Activated CD8-positive, alpha-beta T cell treated with anti-CD3 and anti-CD28 coated beads for 36 hours (primary cell): ENCODE measurements at regions of chr1 and their contacts with region 1.

Region 1: GRCh38 chr1:35726450-35727433 is 8.1 kb upstream of the C1orf216 start:
- DNase-seq: peak; percentile 67
- ATAC-seq: peak; percentile 90
- H3K4me3 Mint-ChIP-seq: no peak overlapping the region
- H3K27ac Mint-ChIP-seq: no peak overlapping the region
- H3K4me1 Mint-ChIP-seq: no peaks in the 10 kb centered on the region
- H3K27me3 Mint-ChIP-seq: no peaks in the 10 kb centered on the region
- CTCF ChIP-seq: peak; percentile 85

Region 2: DNA sequence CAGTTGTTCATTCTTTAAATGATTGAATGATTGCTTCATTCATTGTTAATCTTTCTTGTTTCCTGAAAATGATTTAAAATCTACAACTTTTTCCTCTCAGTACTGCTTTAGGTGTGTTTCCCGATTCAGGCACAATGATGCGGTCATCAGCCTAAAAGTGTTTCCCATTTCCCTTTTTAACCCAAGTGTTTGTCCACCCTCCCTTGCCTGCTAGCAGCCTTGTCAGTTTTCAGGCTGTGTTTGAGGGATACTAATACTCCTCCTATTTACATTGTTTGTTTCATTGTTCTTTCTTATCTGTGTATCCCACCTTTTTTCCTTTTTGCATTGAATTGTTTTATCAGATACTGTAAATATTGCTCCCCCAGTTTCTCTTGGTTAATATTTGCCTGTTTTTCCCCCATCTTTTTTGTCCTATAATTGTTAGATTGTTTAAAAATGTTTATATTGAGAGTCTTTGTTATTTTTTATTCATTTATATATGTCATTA is 300.6 kb before region 1 on chr1:
- CTCF ChIA-PET with region 1: no interaction called
- POLR2A ChIA-PET with region 1: no interaction called
- intact Hi-C with region 1: no loop called
- DNase-seq: no peak
- ATAC-seq: no peak
- H3K4me3 Mint-ChIP-seq: no peak overlapping the region
- H3K27ac Mint-ChIP-seq: no peak overlapping the region
- H3K4me1 Mint-ChIP-seq: peaks cover 1% of the 10 kb centered on the region
- H3K27me3 Mint-ChIP-seq: no peaks in the 10 kb centered on the region
- CTCF ChIP-seq: no peak

Region 3: DNA sequence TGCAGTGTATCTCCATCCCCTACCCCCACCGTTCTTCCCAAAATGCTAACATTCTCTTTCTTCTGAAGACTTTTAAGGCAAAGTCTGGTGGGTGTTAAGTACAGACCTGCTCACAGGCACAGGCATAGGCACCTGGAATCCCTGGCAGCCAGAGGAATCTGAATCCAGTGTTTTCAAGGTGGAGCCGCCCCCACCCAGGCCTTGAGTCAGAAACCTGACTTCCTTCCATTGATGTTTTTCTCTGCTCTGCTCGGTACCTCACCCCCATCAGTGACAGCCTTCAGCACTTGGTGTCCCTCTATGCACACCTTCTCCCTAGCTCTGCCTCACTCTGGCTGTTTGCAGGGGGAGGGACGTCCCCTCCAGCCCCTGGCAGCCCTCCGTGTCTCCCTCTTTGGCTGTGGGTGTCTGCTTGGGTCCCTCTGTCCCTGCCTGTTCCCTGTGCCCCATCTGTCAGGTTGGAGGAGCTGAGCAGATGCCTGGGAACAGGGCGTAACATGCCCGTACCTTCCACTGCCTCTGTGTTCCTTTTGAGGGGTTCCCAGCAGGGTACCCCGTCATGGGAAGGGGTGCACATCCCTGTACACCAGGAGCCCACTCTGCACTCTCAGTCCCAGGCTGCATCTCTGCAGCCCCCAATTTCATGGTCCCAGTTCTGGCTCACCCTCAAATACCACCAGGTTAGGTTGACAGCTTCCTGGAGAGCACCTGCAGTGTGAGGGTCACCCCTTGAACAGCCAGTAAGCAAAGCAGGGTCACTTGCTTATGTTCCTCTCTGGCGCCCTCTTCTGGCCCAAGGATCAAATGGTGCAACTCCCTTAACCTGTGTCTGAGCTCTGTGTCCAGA is 162.5 kb before region 1 on chr1:
- CTCF ChIA-PET with region 1: interaction called, 50 read pairs
- POLR2A ChIA-PET with region 1: no interaction called
- intact Hi-C with region 1: no loop called
- DNase-seq: peak; percentile 93
- ATAC-seq: peak; percentile 83
- H3K4me3 Mint-ChIP-seq: no peak overlapping the region
- H3K27ac Mint-ChIP-seq: peak overlapping the region; percentile 50
- H3K4me1 Mint-ChIP-seq: peaks cover 24% of the 10 kb centered on the region
- H3K27me3 Mint-ChIP-seq: no peaks in the 10 kb centered on the region
- CTCF ChIP-seq: peak; percentile 83

Region 4: DNA sequence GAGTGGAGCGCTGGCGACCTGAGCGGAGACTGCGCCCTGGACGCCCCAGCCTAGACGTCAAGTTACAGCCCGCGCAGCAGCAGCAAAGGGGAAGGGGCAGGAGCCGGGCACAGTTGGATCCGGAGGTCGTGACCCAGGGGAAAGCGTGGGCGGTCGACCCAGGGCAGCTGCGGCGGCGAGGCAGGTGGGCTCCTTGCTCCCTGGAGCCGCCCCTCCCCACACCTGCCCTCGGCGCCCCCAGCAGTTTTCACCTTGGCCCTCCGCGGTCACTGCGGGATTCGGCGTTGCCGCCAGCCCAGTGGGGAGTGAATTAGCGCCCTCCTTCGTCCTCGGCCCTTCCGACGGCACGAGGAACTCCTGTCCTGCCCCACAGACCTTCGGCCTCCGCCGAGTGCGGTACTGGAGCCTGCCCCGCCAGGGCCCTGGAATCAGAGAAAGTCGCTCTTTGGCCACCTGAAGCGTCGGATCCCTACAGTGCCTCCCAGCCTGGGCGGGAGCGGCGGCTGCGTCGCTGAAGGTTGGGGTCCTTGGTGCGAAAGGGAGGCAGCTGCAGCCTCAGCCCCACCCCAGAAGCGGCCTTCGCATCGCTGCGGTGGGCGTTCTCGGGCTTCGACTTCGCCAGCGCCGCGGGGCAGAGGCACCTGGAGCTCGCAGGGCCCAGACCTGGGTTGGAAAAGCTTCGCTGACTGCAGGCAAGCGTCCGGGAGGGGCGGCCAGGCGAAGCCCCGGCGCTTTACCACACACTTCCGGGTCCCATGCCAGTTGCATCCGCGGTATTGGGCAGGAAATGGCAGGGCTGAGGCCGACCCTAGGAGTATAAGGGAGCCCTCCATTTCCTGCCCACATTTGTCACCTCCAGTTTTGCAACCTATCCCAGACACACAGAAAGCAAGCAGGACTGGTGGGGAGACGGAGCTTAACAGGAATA is 149.4 kb before region 1 on chr1:
- CTCF ChIA-PET with region 1: interaction called, 14 read pairs
- POLR2A ChIA-PET with region 1: interaction called, 3 read pairs
- intact Hi-C with region 1: no loop called
- DNase-seq: peak; percentile 81
- ATAC-seq: peak; percentile 92
- H3K4me3 Mint-ChIP-seq: peak overlapping the region; percentile 81
- H3K27ac Mint-ChIP-seq: peak overlapping the region; percentile 87
- H3K4me1 Mint-ChIP-seq: peaks cover 20% of the 10 kb centered on the region
- H3K27me3 Mint-ChIP-seq: peaks cover 10% of the 10 kb centered on the region
- CTCF ChIP-seq: no peak

Region 5: GRCh38 chr1:35715568-35716002 is 11.2 kb before region 1 on chr1:
- CTCF ChIA-PET with region 1: interaction called, 131 read pairs
- POLR2A ChIA-PET with region 1: no interaction called
- intact Hi-C with region 1: no loop called
- DNase-seq: peak; percentile 85
- ATAC-seq: peak; percentile 60
- H3K4me3 Mint-ChIP-seq: peak overlapping the region; percentile 30
- H3K27ac Mint-ChIP-seq: no peak overlapping the region
- H3K4me1 Mint-ChIP-seq: peaks cover 30% of the 10 kb centered on the region
- H3K27me3 Mint-ChIP-seq: no peaks in the 10 kb centered on the region
- CTCF ChIP-seq: peak; percentile 96

Region 6: GRCh38 chr1:35747938-35748702 is 21.4 kb after region 1 on chr1:
- CTCF ChIA-PET with region 1: interaction called, 24 read pairs
- POLR2A ChIA-PET with region 1: interaction called, 4 read pairs
- intact Hi-C with region 1: no loop called
- DNase-seq: no peak
- ATAC-seq: no peak
- H3K4me3 Mint-ChIP-seq: no peak overlapping the region
- H3K27ac Mint-ChIP-seq: no peak overlapping the region
- H3K4me1 Mint-ChIP-seq: peaks cover 4% of the 10 kb centered on the region
- H3K27me3 Mint-ChIP-seq: no peaks in the 10 kb centered on the region
- CTCF ChIP-seq: no peak

Region 7: DNA sequence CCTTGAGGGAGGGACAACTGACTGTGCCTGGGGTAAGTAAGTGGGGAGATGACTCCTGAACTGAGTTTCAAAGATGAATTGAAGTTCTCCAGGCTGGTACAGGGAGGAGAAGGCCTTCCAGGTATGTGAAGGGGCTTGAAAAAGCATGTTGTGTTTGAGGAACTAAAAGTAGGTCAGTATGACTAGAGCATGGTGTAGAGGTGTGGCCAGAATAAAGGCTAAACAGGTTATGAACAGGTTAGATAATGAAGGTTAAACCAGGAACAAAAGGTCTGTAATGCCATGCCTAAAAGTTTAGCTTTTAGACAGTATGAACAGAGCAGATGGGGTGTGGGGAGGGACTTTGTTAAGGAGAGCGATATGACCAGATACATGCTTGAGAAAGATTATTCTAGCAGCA is 50.4 kb after region 1 on chr1:
- CTCF ChIA-PET with region 1: interaction called, 13 read pairs
- POLR2A ChIA-PET with region 1: no interaction called
- intact Hi-C with region 1: no loop called
- DNase-seq: no peak
- ATAC-seq: no peak
- H3K4me3 Mint-ChIP-seq: no peak overlapping the region
- H3K27ac Mint-ChIP-seq: no peak overlapping the region
- H3K4me1 Mint-ChIP-seq: peaks cover 2% of the 10 kb centered on the region
- H3K27me3 Mint-ChIP-seq: no peaks in the 10 kb centered on the region
- CTCF ChIP-seq: no peak